Activated CD4-positive, alpha-beta T cell treated with anti-CD3 and anti-CD28 coated beads, Interleukin-2, amount 10 ng/mL, durations not matched to agents 24 days and 14 days (primary cell): ENCODE measurements at regions of chr12 and their contacts with region 1.

Region 1: DNA sequence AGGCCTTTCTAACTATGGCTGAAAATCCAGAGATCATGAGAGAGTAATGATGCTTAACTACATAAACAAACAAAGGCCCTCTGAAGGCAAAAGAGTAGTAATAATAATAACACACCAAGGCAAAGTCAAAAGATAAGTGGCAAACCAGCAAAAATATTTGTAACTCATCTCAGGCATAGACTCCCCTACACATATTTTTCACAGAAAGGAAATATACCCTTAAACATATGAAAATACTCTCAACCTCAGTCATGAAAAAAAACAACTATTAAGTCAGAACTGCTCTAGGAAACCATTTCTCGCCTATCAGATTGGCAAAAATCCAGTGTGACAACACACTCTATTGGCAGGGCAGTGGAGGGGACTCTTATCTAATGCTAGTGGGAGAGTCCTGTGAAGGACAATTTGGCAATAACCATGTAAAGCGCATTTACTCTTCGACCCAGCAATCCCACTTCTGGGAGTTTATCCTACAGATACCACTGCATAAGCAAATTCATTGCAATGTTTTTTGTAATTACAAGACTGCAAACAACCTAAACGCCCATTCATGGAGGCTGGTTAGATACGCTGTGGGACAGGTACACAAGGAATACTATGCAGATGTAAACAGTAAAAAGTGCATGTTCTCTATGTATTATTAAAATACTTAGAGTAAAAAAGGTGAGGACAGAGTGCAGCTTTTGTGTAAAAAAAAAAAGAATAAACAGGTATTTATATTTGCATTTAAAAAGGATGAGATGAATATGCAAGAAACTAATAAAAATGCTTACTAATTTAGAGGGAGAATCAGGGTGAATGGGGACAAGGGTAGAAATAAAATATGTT is 26.0 kb upstream of the IL22 start:
- DNase-seq: peak; percentile 3
- H3K4me3 Mint-ChIP-seq: no peak overlapping the region
- H3K27ac Mint-ChIP-seq: peak overlapping the region; percentile 60
- H3K4me1 Mint-ChIP-seq: peaks cover 54% of the 10 kb centered on the region
- H3K27me3 Mint-ChIP-seq: no peaks in the 10 kb centered on the region

Region 2: GRCh38 chr12:67804168-67804567 is 475.3 kb before region 1 on chr12:
- intact Hi-C with region 1: loop called (anchors 10 kb)
- DNase-seq: peak; percentile 80
- H3K4me3 Mint-ChIP-seq: no peak overlapping the region
- H3K27ac Mint-ChIP-seq: no peak overlapping the region
- H3K4me1 Mint-ChIP-seq: peaks cover 11% of the 10 kb centered on the region
- H3K27me3 Mint-ChIP-seq: peaks cover 8% of the 10 kb centered on the region

Region 3: GRCh38 chr12:68240597-68241374 is 38.7 kb before region 1 on chr12:
- intact Hi-C with region 1: loop called (anchors 1 kb)
- DNase-seq: peak; percentile 89
- H3K4me3 Mint-ChIP-seq: peak overlapping the region; percentile 70
- H3K27ac Mint-ChIP-seq: peak overlapping the region; percentile 88
- H3K4me1 Mint-ChIP-seq: peaks cover 54% of the 10 kb centered on the region
- H3K27me3 Mint-ChIP-seq: peaks cover 3% of the 10 kb centered on the region

Region 4: GRCh38 chr12:68259318-68259940 is 20.0 kb before region 1 on chr12:
- intact Hi-C with region 1: loop called (anchors 1 kb)
- DNase-seq: peak; percentile 73
- H3K4me3 Mint-ChIP-seq: peak overlapping the region; percentile 11
- H3K27ac Mint-ChIP-seq: peak overlapping the region; percentile 71
- H3K4me1 Mint-ChIP-seq: peaks cover 44% of the 10 kb centered on the region
- H3K27me3 Mint-ChIP-seq: peaks cover 18% of the 10 kb centered on the region

Region 5: DNA sequence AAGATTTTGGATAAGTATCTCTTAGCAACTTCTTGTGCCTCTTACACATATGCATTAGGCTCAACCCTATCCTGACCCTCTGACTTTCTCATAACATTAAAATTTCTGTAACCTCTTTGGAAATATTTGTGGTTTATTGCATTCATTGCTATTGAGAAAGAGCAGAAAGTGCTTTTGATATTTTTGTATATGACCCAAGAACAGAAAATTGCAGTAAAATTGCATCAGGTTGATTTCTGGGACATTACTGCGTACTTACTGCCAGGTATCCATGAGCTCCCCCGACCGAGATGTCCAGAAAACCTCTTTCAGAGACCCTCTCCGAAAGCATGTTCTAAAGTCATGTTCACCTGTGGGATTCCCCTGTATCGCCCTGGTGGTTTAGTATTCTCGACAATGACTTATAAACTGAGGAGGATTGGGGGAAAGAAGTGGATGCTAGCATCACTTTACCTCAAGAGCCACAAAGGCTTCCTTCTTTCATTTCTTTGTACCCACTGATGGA is 11.5 kb before region 1 on chr12:
- intact Hi-C with region 1: loop called (anchors 1 kb)
- DNase-seq: peak; percentile 79
- H3K4me3 Mint-ChIP-seq: peak overlapping the region; percentile 29
- H3K27ac Mint-ChIP-seq: peak overlapping the region; percentile 73
- H3K4me1 Mint-ChIP-seq: peaks cover 45% of the 10 kb centered on the region
- H3K27me3 Mint-ChIP-seq: peaks cover 8% of the 10 kb centered on the region

Region 6: GRCh38 chr12:68290126-68290525 is 10.7 kb after region 1 on chr12:
- intact Hi-C with region 1: loop called (anchors 1 kb)
- DNase-seq: peak; percentile 80
- H3K4me3 Mint-ChIP-seq: peak overlapping the region; percentile 19
- H3K27ac Mint-ChIP-seq: peak overlapping the region; percentile 55
- H3K4me1 Mint-ChIP-seq: peaks cover 43% of the 10 kb centered on the region
- H3K27me3 Mint-ChIP-seq: peaks cover 5% of the 10 kb centered on the region

Region 7: GRCh38 chr12:68310370-68310769 is 30.9 kb after region 1 on chr12:
- intact Hi-C with region 1: loop called (anchors 5 kb)
- DNase-seq: no peak
- H3K4me3 Mint-ChIP-seq: no peak overlapping the region
- H3K27ac Mint-ChIP-seq: no peak overlapping the region
- H3K4me1 Mint-ChIP-seq: peaks cover 16% of the 10 kb centered on the region
- H3K27me3 Mint-ChIP-seq: no peaks in the 10 kb centered on the region